ENCODE measurements at regions of chr12 and their contacts with region 1.

Region 1: GRCh38 chr12:98998697-98999299 is 353.7 kb downstream of the APAF1 start:
- DNase-seq: no peak
- ATAC-seq: peak in 7 of 8 donors; percentile 58 to 80 (median 75)
- H3K4me3 ChIP-seq: no peak overlapping the region
- H3K27ac ChIP-seq: no peak overlapping the region
- H3K4me1 ChIP-seq: peaks cover 0 to 3% (median 0%) of the 10 kb centered on the region in 9 donors
- H3K27me3 ChIP-seq: no peaks in the 10 kb centered on the region
- CTCF ChIP-seq: peak; percentile 33 to 75 (median 67)

Region 2: DNA sequence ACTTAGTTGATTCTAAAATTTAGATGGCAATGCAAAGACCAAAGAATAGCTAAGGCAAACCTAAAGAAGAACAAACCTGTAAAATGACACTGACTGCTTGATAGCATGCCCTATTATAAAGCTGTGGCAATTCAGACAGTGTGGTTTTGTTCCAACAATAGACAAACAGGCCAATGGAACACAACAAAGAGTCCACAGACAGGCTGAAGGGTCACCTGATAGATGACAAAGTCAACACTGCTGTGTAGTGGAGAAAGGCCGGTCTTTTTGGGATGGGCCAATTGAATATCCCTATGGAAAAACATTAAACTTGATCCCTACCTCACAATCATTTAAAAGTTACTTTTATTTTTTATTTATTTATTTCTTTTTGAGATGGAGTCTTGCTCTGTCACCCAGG is 439.1 kb before region 1 on chr12:
- intact Hi-C with region 1: loop called in 3 of 10 experiments (anchors 10 kb)
- DNase-seq: no peak
- ATAC-seq: no peak
- H3K4me3 ChIP-seq: no peak overlapping the region
- H3K27ac ChIP-seq: no peak overlapping the region
- H3K4me1 ChIP-seq: no peaks in the 10 kb centered on the region
- H3K27me3 ChIP-seq: no peaks in the 10 kb centered on the region
- CTCF ChIP-seq: no peak

Region 3: DNA sequence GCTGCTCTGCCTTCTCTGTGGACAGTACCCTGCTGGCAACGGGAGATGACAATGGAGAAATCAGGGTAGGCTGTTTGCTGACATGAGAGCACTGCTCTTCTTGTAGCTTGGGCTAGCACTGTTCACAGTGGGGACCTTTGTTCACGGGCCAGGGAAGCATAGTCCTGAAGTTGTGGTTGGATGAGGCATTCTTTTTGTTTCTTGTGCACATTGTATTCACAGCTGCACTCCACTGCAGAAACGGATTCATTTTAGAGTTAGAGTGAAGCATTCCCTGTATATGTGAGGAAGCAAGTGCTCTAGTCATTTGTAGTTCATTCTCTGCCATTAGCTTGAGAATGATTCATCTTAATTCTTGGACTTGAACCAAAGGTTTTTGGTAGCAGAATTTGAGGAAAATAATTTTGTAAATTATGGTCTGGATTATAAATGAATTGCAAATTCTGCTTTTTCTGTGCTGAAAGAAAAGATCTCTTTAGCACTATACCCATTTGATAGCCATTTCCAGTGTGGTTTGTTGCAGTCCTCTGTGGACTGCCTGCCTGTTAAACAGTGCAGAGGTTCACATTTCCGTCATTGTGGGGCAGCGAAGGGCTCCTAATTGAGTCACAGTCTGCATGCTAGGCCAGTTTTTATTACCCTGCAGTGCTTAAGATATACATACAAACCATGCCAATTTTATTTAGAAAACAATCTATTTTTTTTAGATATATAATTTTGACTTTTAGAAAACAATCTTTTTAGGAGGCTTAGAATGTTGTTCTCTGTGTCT is 273.1 kb before region 1 on chr12:
- intact Hi-C with region 1: loop called in 2 of 10 experiments (anchors 10 kb)
- DNase-seq: no peak
- ATAC-seq: peak in 3 of 8 donors; percentile 50 to 58 (median 55)
- H3K4me3 ChIP-seq: no peak overlapping the region
- H3K27ac ChIP-seq: no peak overlapping the region
- H3K4me1 ChIP-seq: no peaks in the 10 kb centered on the region
- H3K27me3 ChIP-seq: no peaks in the 10 kb centered on the region
- CTCF ChIP-seq: peak in 6 of 9 donors; percentile 27 to 53 (median 34)

Region 4: GRCh38 chr12:98893675-98894411 is 105.0 kb before region 1 on chr12:
- intact Hi-C with region 1: no loop called
- DNase-seq: no peak
- ATAC-seq: no peak
- H3K4me3 ChIP-seq: peak overlapping the region in 3 of 10 donors; percentile 32 to 39 (median 34)
- H3K27ac ChIP-seq: no peak overlapping the region
- H3K4me1 ChIP-seq: peaks cover 0 to 11% (median 0%) of the 10 kb centered on the region in 9 donors
- H3K27me3 ChIP-seq: peaks cover 4 to 90% (median 63%) of the 10 kb centered on the region in 7 donors
- CTCF ChIP-seq: no peak